CD4-positive, alpha-beta T cell (primary cell): ENCODE measurements at regions of chr14 and their contacts with region 1.

Region 1: DNA sequence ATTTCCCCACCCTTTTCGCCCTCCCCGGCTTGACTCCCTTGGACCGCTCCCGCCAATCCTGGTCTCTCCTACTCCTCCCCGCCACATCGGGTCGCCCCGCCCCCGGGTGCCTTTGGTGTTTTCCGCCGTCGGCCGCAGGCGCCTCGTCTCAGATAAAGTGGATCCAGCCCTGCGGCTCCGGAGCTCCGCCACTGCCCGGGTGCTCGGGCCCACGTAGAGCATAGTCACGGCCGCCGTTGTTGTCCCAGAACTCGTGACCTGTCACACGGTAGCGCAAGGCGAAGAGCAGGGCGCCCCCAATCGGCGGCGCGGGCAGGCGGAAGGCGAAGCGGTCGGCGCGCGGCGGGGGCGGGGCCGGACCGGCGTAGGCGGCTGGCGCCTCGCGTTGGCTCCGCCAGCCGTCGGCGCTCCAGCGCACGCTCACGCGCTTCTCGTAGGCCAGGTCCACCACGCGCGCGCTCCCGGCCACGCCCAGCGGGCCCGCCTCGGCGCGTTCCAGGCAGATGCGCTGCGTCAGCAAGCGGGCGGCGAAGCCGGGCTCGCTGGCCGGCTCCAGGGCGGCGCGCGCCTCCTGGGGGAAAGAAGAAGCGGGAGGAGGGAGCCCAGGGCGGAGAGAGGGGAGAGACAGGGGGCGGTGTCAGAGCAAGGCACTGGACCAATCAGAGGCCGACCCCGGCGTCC is 1.2 kb downstream of the PPP1R3E start:
- DNase-seq: peak; percentile 91 to 100 (median 96)
- ATAC-seq: peak; percentile 69
- H3K4me3 ChIP-seq: peak overlapping the region; percentile 75
- H3K4me3 Mint-ChIP-seq: peak overlapping the region; percentile 96
- H3K27ac ChIP-seq: peak overlapping the region; percentile 97
- H3K27ac Mint-ChIP-seq: peak overlapping the region; percentile 97
- H3K4me1 ChIP-seq: peaks cover 30% of the 10 kb centered on the region
- H3K4me1 Mint-ChIP-seq: peaks cover 39% of the 10 kb centered on the region
- H3K27me3 ChIP-seq: peaks cover 7 to 8% of the 10 kb centered on the region in 2 experiments
- H3K27me3 Mint-ChIP-seq: peaks cover 15% of the 10 kb centered on the region
- CTCF ChIP-seq: peak; percentile 65

Region 2: GRCh38 chr14:22929104-22929847 is 372.2 kb before region 1 on chr14 and contains the start of gene PRMT5:
- CTCF ChIA-PET with region 1: no interaction called
- POLR2A ChIA-PET with region 1: interaction called, 13 read pairs
- intact Hi-C with region 1: loop called in 1 of 2 experiments (anchors 10 kb)
- DNase-seq: peak; percentile 93 to 100 (median 97)
- ATAC-seq: peak; percentile 96
- H3K4me3 ChIP-seq: peak within 1 kb of the TSS; percentile 91
- H3K4me3 Mint-ChIP-seq: no peak within 1 kb of the TSS
- H3K27ac ChIP-seq: peak within 1 kb of the TSS; percentile 79 to 88
- H3K27ac Mint-ChIP-seq: no peak within 1 kb of the TSS
- H3K4me1 ChIP-seq: peaks cover 30% of the 10 kb centered on the region
- H3K4me1 Mint-ChIP-seq: peaks cover 11% of the 10 kb centered on the region
- H3K27me3 ChIP-seq: no peaks in the 10 kb centered on the region
- H3K27me3 Mint-ChIP-seq: no peaks in the 10 kb centered on the region
- CTCF ChIP-seq: no peak
- total RNA-seq, gene PRMT5: 15.6 to 19.3 TPM

Region 3: DNA sequence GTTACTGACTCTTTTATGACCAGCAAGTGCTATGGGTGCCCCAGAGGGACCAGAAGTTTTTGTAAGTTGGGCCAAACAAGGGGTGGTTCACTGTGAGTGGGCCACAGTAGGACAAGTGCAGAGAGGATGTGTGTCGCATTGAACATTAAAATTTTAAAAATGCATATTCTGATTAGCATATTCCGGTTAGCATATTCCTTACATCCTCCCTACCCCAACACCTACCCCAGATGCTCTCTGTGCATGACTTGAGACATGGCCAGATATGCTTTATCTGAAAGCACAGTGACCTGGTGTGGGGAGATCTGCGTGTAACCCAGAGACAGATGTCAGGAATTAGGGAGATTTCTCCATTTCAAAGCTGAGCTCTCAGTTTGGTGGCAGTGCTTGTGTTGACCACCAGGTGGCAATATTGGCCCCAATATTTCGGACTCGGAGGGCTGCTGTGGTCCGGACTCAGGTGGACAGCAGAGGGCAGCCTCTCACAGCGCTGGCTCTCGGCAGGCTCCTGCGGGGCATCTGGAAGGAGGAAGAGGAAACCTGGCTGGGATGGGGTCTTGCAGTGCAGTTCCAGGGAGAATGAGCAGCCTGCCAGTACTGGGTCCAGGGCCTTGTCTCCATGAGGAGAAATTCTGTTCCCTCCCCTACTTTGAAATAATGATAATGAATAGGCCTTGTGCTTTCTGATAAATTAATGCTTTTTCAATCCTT is 180.7 kb before region 1 on chr14:
- CTCF ChIA-PET with region 1: interaction called, 5 read pairs
- POLR2A ChIA-PET with region 1: interaction called, 30 read pairs
- intact Hi-C with region 1: loop called (anchors 5 kb)
- DNase-seq: peak; percentile 63 to 91 (median 72)
- ATAC-seq: peak; percentile 61
- H3K4me3 ChIP-seq: no peak overlapping the region
- H3K4me3 Mint-ChIP-seq: peak overlapping the region; percentile 80
- H3K27ac ChIP-seq: peak overlapping the region; percentile 51 to 55
- H3K27ac Mint-ChIP-seq: peak overlapping the region; percentile 94
- H3K4me1 ChIP-seq: peaks cover 54% of the 10 kb centered on the region
- H3K4me1 Mint-ChIP-seq: peaks cover 61% of the 10 kb centered on the region
- H3K27me3 ChIP-seq: no peaks in the 10 kb centered on the region
- H3K27me3 Mint-ChIP-seq: no peaks in the 10 kb centered on the region
- CTCF ChIP-seq: peak; percentile 99

Region 4: DNA sequence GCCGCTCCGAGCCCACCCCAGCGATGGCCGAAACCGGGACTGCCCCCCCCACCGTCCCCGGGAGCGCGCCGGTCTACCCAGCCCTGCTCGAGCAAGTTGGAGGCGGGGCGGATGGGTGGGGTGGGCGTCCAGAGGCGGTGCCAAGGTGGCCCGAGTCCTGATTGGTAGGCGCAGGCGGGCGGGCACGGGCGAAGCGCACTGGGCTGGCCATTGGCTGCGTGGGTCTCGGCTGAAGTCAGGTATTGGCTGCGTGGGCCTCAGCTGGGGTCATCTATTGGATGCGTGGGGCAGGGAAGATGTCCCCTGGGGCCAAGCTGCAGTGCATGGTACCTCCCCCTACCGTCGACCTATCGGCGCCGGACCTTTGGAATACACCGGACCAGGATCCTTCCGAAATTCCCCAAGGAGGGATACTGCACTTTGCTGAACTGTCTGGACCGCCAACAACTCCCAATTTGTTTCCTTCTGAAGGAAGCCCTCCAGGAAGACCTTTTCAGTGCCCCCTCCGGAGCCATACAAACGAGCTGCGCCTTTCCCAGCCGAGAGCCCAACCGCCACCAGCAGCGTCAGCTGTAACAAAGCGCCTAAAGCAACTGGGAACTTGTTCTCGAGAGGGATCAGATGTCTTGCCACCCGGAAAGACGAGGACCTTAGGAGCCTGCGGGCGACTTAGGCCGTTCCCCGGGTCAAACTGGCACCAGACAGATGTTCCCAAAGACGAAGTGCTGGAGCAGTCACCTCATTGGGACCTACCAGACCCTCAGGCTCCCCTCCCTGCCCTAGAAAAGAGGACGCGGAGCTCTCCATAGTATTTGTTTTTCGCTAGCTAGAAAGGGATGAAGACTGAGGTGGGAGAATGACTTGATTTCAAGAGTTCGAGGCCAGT is 15.2 kb before region 1 on chr14 and contains the start of gene HOMEZ:
- CTCF ChIA-PET with region 1: interaction called, 16 read pairs
- POLR2A ChIA-PET with region 1: interaction called, 104 read pairs
- intact Hi-C with region 1: loop called (anchors 1 to 2 kb)
- DNase-seq: peak; percentile 94 to 98 (median 97)
- ATAC-seq: peak; percentile 97
- H3K4me3 ChIP-seq: peak within 1 kb of the TSS; percentile 81
- H3K4me3 Mint-ChIP-seq: peak within 1 kb of the TSS; percentile 95
- H3K27ac ChIP-seq: peak within 1 kb of the TSS; percentile 79 to 81
- H3K27ac Mint-ChIP-seq: peak within 1 kb of the TSS; percentile 94
- H3K4me1 ChIP-seq: peaks cover 17% of the 10 kb centered on the region
- H3K4me1 Mint-ChIP-seq: peaks cover 32% of the 10 kb centered on the region
- H3K27me3 ChIP-seq: no peaks in the 10 kb centered on the region
- H3K27me3 Mint-ChIP-seq: no peaks in the 10 kb centered on the region
- CTCF ChIP-seq: no peak
- total RNA-seq, gene HOMEZ: 2.0 to 2.8 TPM

Region 5: DNA sequence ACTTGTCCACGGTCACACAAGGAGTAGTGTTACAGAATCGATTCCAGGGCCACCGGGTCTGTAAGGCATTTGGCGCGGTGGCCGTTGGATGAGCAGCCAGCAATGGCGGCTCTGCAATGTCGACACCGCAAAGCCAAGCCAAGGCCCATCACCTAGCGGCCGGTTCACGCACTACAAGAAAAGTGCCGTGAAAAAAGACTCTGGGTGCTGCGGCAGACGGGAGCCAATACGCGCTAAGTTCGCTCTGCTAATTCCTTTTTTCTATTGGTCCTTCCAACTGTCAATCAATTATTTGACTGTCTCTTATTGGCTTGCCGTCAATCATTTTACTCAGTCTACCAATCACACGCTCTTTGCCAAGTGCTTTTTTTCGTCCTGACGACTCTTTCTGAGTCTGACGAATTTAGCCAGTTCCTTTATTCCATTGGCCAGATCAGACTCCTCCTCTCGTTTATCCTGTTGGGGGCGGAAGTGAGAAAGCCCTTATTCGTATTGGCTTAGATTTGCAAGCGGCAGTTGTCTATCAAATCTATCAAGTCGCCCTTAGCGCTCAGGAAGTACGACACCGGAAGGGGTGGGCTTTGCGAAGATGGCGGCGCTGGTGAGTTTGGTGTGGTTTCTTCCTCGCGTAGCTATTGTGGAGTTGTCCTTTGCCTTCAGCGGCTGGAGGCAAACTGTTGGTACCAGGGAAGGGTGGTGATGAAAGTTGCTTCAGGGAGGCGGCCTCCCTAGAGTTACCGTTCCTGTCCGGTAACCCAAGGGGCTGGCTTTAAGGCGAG is 167.9 kb after region 1 on chr14 and contains the start of gene NGDN:
- CTCF ChIA-PET with region 1: no interaction called
- POLR2A ChIA-PET with region 1: interaction called, 14 read pairs
- intact Hi-C with region 1: no loop called
- DNase-seq: peak; percentile 81 to 99 (median 88)
- ATAC-seq: peak; percentile 90
- H3K4me3 ChIP-seq: peak within 1 kb of the TSS; percentile 87
- H3K4me3 Mint-ChIP-seq: no peak within 1 kb of the TSS
- H3K27ac ChIP-seq: peak within 1 kb of the TSS; percentile 67 to 92
- H3K27ac Mint-ChIP-seq: no peak within 1 kb of the TSS
- H3K4me1 ChIP-seq: peaks cover 14% of the 10 kb centered on the region
- H3K4me1 Mint-ChIP-seq: peaks cover 7% of the 10 kb centered on the region
- H3K27me3 ChIP-seq: no peaks in the 10 kb centered on the region
- H3K27me3 Mint-ChIP-seq: no peaks in the 10 kb centered on the region
- CTCF ChIP-seq: peak; percentile 74
- total RNA-seq, gene NGDN: 146 to 149 TPM

Region 6: DNA sequence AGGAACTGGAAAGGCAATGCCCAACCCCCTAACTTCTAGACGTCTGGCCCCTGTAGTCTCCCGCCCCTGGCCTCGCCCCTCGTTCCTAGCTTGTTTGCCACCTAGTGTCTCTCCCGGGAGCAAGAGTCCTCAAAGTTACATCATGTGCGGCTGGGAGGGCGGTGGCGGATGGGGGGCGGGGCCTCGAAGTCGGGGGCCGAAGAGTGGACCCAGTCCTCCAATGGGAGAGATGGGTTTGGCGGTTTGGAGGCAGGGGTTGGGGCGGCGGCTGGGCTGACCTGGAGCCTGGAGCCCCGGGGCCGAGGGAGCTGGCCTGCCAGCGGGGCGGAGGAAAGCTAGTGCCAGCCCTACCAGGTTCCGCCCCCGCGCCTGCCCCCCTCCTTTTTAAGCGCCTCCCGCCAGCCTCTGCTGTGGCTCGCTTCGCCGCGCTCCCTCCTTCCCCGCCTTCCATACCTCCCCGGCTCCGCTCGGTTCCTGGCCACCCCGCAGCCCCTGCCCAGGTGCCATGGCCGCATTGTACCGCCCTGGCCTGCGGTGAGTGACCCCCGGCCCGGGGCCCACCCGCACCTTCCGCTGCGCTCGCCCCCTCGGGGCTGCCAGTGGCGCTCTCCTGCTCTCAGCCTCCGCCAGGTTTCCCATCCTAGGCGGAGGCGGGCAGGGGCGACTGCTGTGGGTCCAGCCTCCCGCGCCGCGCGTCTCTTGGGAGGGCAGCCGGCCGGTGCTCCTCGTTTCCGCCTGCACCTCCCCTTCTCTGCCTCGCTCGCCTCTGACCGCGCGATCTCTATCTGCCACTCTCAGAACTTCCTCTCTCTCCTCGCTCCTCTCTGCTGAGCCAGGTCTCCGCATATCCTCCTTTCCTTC is 792.7 kb after region 1 on chr14 and contains the start of gene PCK2:
- CTCF ChIA-PET with region 1: no interaction called
- POLR2A ChIA-PET with region 1: no interaction called
- intact Hi-C with region 1: no loop called
- DNase-seq: peak; percentile 53 to 82 (median 67)
- ATAC-seq: peak; percentile 77
- H3K4me3 ChIP-seq: peak within 1 kb of the TSS; percentile 97
- H3K4me3 Mint-ChIP-seq: peak within 1 kb of the TSS; percentile 97
- H3K27ac ChIP-seq: peak within 1 kb of the TSS; percentile 71 to 78
- H3K27ac Mint-ChIP-seq: peak within 1 kb of the TSS; percentile 90
- H3K4me1 ChIP-seq: peaks cover 29% of the 10 kb centered on the region
- H3K4me1 Mint-ChIP-seq: peaks cover 37% of the 10 kb centered on the region
- H3K27me3 ChIP-seq: no peaks in the 10 kb centered on the region
- H3K27me3 Mint-ChIP-seq: no peaks in the 10 kb centered on the region
- CTCF ChIP-seq: no peak
- total RNA-seq, gene PCK2: 5.2 to 7.4 TPM